ENCODE measurements at regions of chr13 and their contacts with region 1.

Region 1: GRCh38 chr13:49996951-49997895 is at the start of gene TRIM13:
- DNase-seq: peak; percentile 82 to 87
- H3K4me3 ChIP-seq: peak within 1 kb of the TSS; percentile 84 to 89 (median 84)
- H3K27ac ChIP-seq: peak within 1 kb of the TSS; percentile 98 to 99
- H3K4me1 ChIP-seq: peaks cover 0 to 3% of the 10 kb centered on the region in 2 donors
- H3K27me3 ChIP-seq: no peaks in the 10 kb centered on the region
- CTCF ChIP-seq: peak; percentile 64 to 66 (median 65)
- POLR2A ChIP-seq: peak; percentile 42
- total RNA-seq, gene TRIM13: 16.0 to 28.8 (median 22.9) TPM

Region 2: DNA sequence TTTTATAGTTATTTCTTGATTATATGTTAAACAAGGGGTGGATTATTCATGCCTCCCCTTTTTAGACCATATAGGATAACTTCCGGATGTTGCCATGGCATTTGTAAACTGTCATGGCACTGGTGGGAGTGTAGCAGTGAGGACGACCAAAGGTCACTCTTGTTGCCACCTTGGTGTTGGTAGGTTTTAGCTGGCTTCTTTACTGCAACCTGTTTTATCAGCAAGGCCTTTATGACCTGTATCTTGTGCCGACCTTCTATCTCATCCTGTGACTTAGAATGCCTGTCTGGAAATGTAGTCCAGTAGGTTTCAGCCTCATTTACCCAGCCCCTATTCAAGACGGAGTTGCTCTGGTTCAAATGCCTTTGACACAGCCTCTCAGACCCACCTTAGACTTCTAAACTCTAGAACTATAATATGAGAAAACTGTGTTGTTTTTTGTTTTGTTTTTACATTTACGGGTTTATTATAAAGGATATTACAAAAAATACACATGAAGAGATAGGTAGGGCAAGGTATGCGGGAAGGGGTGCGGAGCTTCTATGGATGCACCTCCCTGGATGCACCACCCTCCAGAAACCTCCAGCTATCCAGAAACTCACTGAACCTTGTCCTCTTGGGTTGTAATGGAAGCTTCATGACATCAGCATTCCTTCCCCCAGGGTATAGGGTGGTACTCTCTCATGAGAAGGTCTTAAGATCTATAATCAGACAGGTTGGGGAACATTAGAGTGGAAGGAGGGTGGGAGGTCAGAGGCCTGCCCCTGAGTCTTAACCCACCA is 45.3 kb before region 1 on chr13:
- intact Hi-C with region 1: no loop called
- DNase-seq: no peak
- H3K4me3 ChIP-seq: no peak overlapping the region
- H3K27ac ChIP-seq: no peak overlapping the region
- H3K4me1 ChIP-seq: no peaks in the 10 kb centered on the region
- H3K27me3 ChIP-seq: no peaks in the 10 kb centered on the region
- CTCF ChIP-seq: no peak
- POLR2A ChIP-seq: no peak

Region 3: DNA sequence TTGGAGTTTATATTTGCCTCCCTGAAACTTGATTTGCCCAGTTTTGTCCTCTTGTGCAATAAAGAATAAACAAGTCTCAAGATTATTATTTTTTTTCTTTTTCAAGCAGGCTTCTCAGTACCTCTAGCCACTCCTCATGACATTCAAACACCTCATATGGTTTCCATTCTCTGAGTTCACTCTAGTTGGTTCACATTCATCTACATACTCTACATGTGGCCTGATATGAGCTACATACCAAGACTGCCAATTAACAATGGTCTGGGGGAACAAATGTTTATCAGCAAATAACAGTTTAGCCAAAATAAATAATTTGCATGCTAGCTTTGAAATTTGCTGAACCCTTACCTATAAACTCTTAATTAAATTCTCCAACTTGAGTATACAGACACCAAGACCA is 40.6 kb after region 1 on chr13:
- intact Hi-C with region 1: loop called (anchors 2 kb)
- DNase-seq: no peak
- H3K4me3 ChIP-seq: no peak overlapping the region
- H3K27ac ChIP-seq: no peak overlapping the region
- H3K4me1 ChIP-seq: no peaks in the 10 kb centered on the region
- H3K27me3 ChIP-seq: no peaks in the 10 kb centered on the region
- CTCF ChIP-seq: no peak
- POLR2A ChIP-seq: no peak

Region 4: GRCh38 chr13:50123862-50124536 is 126.8 kb after region 1 on chr13:
- intact Hi-C with region 1: loop called (anchors 10 kb)
- DNase-seq: peak; percentile 67 to 96
- H3K4me3 ChIP-seq: peak overlapping the region; percentile 90 to 99 (median 97)
- H3K27ac ChIP-seq: peak overlapping the region; percentile 98 to 99
- H3K4me1 ChIP-seq: no peaks in the 10 kb centered on the region
- H3K27me3 ChIP-seq: peaks cover 0 to 26% of the 10 kb centered on the region in 2 donors
- CTCF ChIP-seq: no peak
- POLR2A ChIP-seq: peak; percentile 60

Measured in breast epithelium (tissue), 4 donors.